CD4-positive, alpha-beta memory T cell (primary cell): ENCODE measurements at regions of chr22 and their contacts with region 1.

Region 1: DNA sequence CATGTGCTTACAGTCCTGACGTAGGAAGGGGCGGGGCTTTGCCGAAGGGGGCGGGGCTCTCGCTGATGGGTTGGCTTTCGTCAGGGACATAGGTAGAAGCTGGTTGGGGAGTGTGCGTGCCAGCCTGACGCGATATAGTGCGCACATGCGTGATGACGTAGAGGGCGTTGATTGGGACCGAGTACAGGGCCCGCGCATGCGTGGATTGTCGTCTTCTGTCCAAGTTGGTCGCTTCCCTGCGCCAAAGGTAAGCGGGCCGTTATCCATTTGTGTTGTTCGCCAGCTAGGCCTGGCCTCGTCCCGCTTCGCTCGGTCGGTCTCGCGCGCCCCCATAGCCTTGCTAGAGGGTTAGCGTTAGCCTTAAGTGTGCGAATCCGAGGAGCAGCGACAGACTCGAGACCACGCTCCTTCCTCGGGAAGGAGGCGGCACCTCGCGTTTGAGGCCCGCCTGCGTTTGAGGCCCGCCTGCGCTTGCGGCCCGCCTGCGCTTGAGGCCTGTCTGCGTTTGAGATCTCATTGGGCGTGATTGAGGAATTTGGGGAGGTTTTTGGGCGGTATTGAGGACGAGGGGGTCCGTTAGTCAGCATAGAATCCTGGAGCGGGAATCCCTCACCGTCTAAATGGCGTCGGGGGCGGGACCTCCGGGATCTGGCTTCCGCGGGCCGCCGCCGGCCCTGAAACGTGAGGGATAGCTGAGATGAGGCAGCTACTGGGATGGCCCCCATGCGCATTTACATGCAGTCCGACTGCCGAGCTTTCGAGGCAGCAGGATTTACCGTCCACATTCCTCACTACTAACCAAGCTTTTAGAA is at the start of gene XRCC6:
- DNase-seq: peak; percentile 99 to 100 (median 99)
- H3K4me3 ChIP-seq: peak within 1 kb of the TSS; percentile 76 to 90
- H3K4me3 Mint-ChIP-seq: peak within 1 kb of the TSS; percentile 93 to 100 (median 98)
- H3K27ac ChIP-seq: peak within 1 kb of the TSS; percentile 100
- H3K27ac Mint-ChIP-seq: peak within 1 kb of the TSS; percentile 98 to 100 (median 99)
- H3K4me1 ChIP-seq: peaks cover 45% of the 10 kb centered on the region
- H3K4me1 Mint-ChIP-seq: peaks cover 23 to 52% (median 34%) of the 10 kb centered on the region in 4 donors
- H3K27me3 ChIP-seq: no peaks in the 10 kb centered on the region
- H3K27me3 Mint-ChIP-seq: no peaks in the 10 kb centered on the region
- total RNA-seq, gene XRCC6: 174 to 181 TPM

Region 2: DNA sequence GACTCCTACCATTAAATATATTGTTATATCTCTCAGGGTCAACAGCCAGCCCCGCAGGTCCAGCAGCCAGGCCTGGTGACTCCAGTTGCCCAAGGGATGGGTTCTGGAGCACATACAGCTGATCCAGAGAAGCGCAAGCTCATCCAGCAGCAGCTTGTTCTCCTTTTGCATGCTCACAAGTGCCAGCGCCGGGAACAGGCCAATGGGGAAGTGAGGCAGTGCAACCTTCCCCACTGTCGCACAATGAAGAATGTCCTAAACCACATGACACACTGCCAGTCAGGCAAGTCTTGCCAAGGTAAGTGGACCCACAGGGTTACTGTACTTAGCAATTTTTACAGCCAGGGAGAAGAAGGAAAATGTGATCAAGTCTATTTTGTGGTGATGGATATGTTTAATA is 493.9 kb before region 1 on chr22:
- CTCF ChIA-PET with region 1: no interaction called
- POLR2A ChIA-PET with region 1: no interaction called
- intact Hi-C with region 1: no loop called
- DNase-seq: no peak
- H3K4me3 ChIP-seq: no peak overlapping the region
- H3K4me3 Mint-ChIP-seq: no peak overlapping the region
- H3K27ac ChIP-seq: no peak overlapping the region
- H3K27ac Mint-ChIP-seq: peak overlapping the region in 2 of 7 donors; percentile 62 to 70
- H3K4me1 ChIP-seq: peaks cover 4% of the 10 kb centered on the region
- H3K4me1 Mint-ChIP-seq: peaks cover 8 to 13% (median 11%) of the 10 kb centered on the region in 4 donors
- H3K27me3 ChIP-seq: no peaks in the 10 kb centered on the region
- H3K27me3 Mint-ChIP-seq: no peaks in the 10 kb centered on the region

Region 3: DNA sequence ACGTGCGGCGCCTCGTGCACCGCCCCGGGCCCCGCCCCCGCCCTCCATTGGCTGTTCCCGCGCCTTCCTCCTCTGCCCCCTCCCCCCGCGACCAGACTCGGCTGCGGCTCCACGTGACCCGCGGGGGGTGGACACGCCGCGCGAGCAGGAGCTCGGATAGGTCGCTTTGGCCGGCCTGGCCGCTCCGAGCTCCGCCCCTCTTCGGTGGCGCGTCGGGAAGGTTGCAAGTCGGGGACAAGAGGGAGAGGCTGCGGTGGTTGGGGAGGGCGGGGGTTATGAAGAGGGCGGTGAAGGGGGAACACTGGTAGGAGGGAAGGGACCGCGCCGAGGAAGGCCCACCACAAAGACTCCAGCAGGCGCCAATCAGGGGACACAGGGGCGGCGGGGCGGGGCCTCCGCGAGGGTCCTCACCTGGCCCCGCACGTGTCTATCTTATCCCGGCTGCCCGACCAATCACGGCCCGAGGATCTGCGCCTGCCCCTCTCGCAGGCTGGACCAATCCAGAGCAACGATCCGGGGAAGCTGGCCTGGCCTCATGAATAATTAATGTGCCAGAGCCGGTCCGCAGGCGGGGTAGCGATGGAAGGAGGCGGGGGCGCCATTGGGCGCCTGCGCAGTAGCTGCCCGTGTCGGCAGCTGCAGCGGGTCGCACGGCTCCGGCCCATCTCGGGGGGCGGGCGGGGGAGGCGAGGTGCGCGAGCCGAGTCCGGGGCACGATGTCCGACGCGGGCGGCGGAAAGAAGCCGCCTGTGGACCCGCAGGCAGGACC is 239.8 kb before region 1 on chr22 and contains the start of gene TEF:
- CTCF ChIA-PET with region 1: no interaction called
- POLR2A ChIA-PET with region 1: interaction called, 11 read pairs
- intact Hi-C with region 1: loop called (anchors 1 kb)
- DNase-seq: peak; percentile 99
- H3K4me3 ChIP-seq: peak within 1 kb of the TSS; percentile 65 to 88
- H3K4me3 Mint-ChIP-seq: peak within 1 kb of the TSS; percentile 90 to 97 (median 94)
- H3K27ac ChIP-seq: peak within 1 kb of the TSS; percentile 87
- H3K27ac Mint-ChIP-seq: peak within 1 kb of the TSS; percentile 98 to 99 (median 98)
- H3K4me1 ChIP-seq: peaks cover 18% of the 10 kb centered on the region
- H3K4me1 Mint-ChIP-seq: peaks cover 12 to 36% (median 22%) of the 10 kb centered on the region in 4 donors
- H3K27me3 ChIP-seq: no peaks in the 10 kb centered on the region
- H3K27me3 Mint-ChIP-seq: no peaks in the 10 kb centered on the region
- total RNA-seq, gene TEF: 6.5 to 8.8 TPM

Region 4: GRCh38 chr22:41411021-41411851 is 210.1 kb before region 1 on chr22:
- CTCF ChIA-PET with region 1: interaction called, 3 read pairs
- POLR2A ChIA-PET with region 1: interaction called, 12 read pairs
- intact Hi-C with region 1: no loop called
- DNase-seq: no peak
- H3K4me3 ChIP-seq: no peak overlapping the region
- H3K4me3 Mint-ChIP-seq: peak overlapping the region in 2 of 8 donors; percentile 39 to 54
- H3K27ac ChIP-seq: no peak overlapping the region
- H3K27ac Mint-ChIP-seq: peak overlapping the region; percentile 67 to 99 (median 98)
- H3K4me1 ChIP-seq: peaks cover 26% of the 10 kb centered on the region
- H3K4me1 Mint-ChIP-seq: peaks cover 13 to 40% (median 26%) of the 10 kb centered on the region in 4 donors
- H3K27me3 ChIP-seq: no peaks in the 10 kb centered on the region
- H3K27me3 Mint-ChIP-seq: no peaks in the 10 kb centered on the region

Region 5: DNA sequence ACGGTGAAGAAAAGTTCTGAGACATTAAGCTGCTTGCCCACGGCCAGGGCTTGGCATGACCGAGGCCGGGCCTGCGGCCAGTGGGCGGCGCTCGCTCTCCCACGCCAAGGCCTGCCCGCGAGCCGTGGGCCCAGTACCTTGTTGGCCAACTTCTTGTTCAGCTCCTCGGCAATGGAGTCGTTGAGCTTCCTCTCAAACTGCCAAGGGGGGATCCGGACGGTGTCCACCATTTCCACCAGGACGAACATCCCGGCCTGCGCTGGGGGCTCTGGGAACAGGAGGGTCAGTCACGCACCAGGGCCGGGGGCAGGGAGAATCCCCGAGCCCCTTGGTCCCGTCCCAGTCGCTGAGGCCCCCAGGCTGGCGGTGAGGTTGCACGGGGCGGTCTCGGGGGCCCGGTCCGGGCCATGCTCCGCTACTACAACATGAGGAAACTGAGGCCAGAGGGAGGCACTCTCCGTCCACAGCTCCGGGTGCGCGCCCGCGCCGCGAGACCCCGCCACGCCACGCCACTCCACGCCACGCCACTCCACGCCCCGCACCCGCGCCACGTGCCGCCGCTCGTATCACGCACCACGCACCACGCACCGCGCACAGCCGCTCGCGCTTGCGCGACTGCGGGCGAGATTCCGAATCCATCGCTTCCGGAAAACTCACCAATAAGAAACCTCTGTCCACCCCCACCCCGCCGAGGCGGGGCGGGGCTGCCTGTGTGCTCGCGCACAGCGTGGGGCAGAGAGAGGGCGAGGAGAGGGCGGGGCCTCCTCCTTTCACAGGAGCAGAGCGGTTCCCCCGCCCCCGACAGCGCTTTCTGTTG is 77.2 kb before region 1 on chr22 and contains the start of gene POLR3H:
- CTCF ChIA-PET with region 1: interaction called, 6 read pairs
- POLR2A ChIA-PET with region 1: no interaction called
- intact Hi-C with region 1: loop called (anchors 1 kb)
- DNase-seq: peak; percentile 95 to 97 (median 95)
- H3K4me3 ChIP-seq: peak within 1 kb of the TSS; percentile 78
- H3K4me3 Mint-ChIP-seq: peak within 1 kb of the TSS; percentile 95 to 98 (median 98)
- H3K27ac ChIP-seq: peak within 1 kb of the TSS; percentile 77
- H3K27ac Mint-ChIP-seq: peak within 1 kb of the TSS; percentile 90 to 98 (median 96)
- H3K4me1 ChIP-seq: peaks cover 26% of the 10 kb centered on the region
- H3K4me1 Mint-ChIP-seq: peaks cover 29 to 48% (median 41%) of the 10 kb centered on the region in 4 donors
- H3K27me3 ChIP-seq: no peaks in the 10 kb centered on the region
- H3K27me3 Mint-ChIP-seq: no peaks in the 10 kb centered on the region
- total RNA-seq, gene POLR3H: 43.6 to 43.7 TPM

Region 6: GRCh38 chr22:41666661-41667258 is 45.5 kb after region 1 on chr22:
- CTCF ChIA-PET with region 1: interaction called, 7 read pairs
- POLR2A ChIA-PET with region 1: interaction called, 18 read pairs
- intact Hi-C with region 1: loop called (anchors 1 kb)
- DNase-seq: peak; percentile 91 to 97 (median 96)
- H3K4me3 ChIP-seq: peak overlapping the region in 1 of 2 donors; percentile 39
- H3K4me3 Mint-ChIP-seq: peak overlapping the region; percentile 86 to 94 (median 88)
- H3K27ac ChIP-seq: peak overlapping the region; percentile 80
- H3K27ac Mint-ChIP-seq: peak overlapping the region; percentile 97 to 99 (median 98)
- H3K4me1 ChIP-seq: peaks cover 14% of the 10 kb centered on the region
- H3K4me1 Mint-ChIP-seq: peaks cover 4 to 14% (median 11%) of the 10 kb centered on the region in 4 donors
- H3K27me3 ChIP-seq: no peaks in the 10 kb centered on the region
- H3K27me3 Mint-ChIP-seq: no peaks in the 10 kb centered on the region

Region 7: GRCh38 chr22:41688365-41689211 is 67.3 kb after region 1 on chr22 and contains the start of gene SNU13:
- CTCF ChIA-PET with region 1: no interaction called
- POLR2A ChIA-PET with region 1: interaction called, 14 read pairs
- intact Hi-C with region 1: no loop called
- DNase-seq: peak; percentile 91 to 95 (median 92)
- H3K4me3 ChIP-seq: peak within 1 kb of the TSS; percentile 75 to 96
- H3K4me3 Mint-ChIP-seq: peak within 1 kb of the TSS; percentile 94 to 99 (median 97)
- H3K27ac ChIP-seq: peak within 1 kb of the TSS; percentile 95
- H3K27ac Mint-ChIP-seq: peak within 1 kb of the TSS; percentile 95 to 99 (median 98)
- H3K4me1 ChIP-seq: peaks cover 37% of the 10 kb centered on the region
- H3K4me1 Mint-ChIP-seq: peaks cover 21 to 48% (median 33%) of the 10 kb centered on the region in 4 donors
- H3K27me3 ChIP-seq: no peaks in the 10 kb centered on the region
- H3K27me3 Mint-ChIP-seq: no peaks in the 10 kb centered on the region
- total RNA-seq, gene SNU13: 123 to 129 TPM